Pancreas (tissue), 10 donors: ENCODE measurements at regions of chr15 and their contacts with region 1.

Region 1: DNA sequence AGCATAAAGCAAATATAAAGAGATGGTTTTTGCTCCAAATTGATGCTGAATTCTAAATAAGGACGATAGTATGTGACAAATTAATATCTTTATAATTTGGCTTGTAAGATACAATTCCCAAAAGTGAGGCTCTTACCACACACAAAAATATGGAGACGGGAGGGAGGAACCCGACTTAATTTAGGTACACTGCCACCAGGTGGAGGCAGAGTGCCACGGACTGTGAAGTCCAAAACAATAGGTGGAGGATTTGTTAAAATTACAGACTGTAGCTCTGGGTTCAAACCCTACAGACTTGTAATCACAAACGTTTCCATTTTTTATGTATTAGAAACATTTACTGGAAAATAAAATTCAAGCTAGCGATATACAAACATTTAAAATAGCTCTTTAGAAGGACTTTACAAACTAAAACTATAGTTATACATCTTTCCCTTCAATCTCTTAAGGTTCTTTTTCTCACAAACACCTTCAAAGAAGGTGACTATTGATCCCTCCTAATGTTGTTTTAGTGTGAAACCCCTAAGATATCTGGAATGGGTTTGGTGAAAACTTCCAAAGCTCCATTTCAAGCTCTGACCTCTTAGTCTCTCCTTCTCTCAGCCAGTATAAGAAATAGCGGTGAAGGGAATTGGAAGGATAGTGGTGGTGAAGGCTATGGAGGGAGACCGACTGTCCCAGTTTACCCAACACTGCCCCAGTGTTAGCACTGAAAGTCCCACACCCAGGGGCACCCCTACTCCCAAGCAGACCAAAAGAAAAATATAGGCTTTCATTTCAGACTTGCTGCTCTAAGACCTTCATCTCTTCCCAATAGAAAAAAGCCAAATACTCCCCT is 89.7 kb downstream of the AQP9 start:
- DNase-seq: peak in 5 of 6 donors; percentile 31 to 68 (median 45)
- ATAC-seq: peak; percentile 67 to 83 (median 81)
- H3K4me3 ChIP-seq: no peak overlapping the region
- H3K27ac ChIP-seq: peak overlapping the region in 1 of 4 donors; percentile 41
- H3K4me1 ChIP-seq: no peaks in the 10 kb centered on the region
- H3K27me3 ChIP-seq: no peaks in the 10 kb centered on the region
- CTCF ChIP-seq: peak in 3 of 4 donors; percentile 40 to 59 (median 49)

Region 2: GRCh38 chr15:58758138-58758537 is 530.2 kb after region 1 on chr15:
- intact Hi-C with region 1: loop called in 1 of 3 experiments (anchors 5 kb)
- DNase-seq: no peak
- ATAC-seq: peak in 3 of 4 donors; percentile 55 to 78 (median 65)
- H3K4me3 ChIP-seq: no peak overlapping the region
- H3K27ac ChIP-seq: no peak overlapping the region
- H3K4me1 ChIP-seq: no peaks in the 10 kb centered on the region
- H3K27me3 ChIP-seq: no peaks in the 10 kb centered on the region
- CTCF ChIP-seq: peak in 1 of 4 donors; percentile 13